Activated CD4-positive, alpha-beta memory T cell treated with anti-CD3 and anti-CD28 coated beads for 36 hours (primary cell): ENCODE measurements at regions of chr6 and their contacts with region 1.

Region 1: DNA sequence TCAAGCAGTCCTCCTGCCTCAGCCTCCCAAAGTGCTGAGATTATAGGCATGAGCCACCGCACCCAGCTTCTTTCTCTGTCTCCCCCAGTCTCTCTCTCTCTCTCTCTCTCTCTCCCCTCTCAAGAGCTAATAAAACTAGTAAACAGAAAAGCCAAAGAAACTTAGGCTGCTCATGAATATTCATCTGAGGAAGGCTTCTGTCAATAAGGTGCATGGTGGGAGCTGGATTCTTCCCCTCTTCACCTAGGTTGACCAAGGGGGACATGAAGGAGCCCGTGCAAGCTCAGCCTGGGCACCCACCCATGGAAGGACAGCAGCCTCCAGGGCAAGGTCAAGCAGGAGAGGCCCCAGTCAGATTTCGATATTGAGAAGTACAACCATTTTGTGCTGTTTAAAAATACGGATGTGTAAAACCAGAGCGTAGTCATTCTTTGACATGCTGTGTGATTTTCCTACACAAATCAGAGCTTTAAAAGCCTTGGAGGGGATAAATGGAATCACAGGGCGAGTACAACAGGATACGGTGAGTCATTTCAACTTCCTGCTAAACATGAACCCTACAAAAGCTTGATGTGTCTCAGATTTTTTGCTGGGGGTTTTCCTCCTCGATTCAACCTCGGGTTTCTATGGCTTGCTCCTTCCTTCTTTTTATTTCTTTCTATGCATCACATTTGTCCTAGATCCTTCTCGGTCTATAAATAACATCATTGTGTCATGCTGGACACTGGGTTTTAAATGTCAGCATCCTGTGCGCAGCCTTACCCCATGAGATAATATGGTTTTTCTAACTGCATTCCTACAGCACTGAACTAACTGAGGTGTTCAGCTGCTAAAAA is 368.9 kb upstream of the JARID2 start:
- DNase-seq: peak; percentile 59
- H3K4me3 Mint-ChIP-seq: peak overlapping the region; percentile 40
- H3K27ac Mint-ChIP-seq: peak overlapping the region; percentile 97
- H3K4me1 Mint-ChIP-seq: peaks cover 74% of the 10 kb centered on the region
- H3K27me3 Mint-ChIP-seq: no peaks in the 10 kb centered on the region

Region 2: GRCh38 chr6:14452567-14453527 is 424.1 kb before region 1 on chr6:
- CTCF ChIA-PET with region 1: no interaction called
- POLR2A ChIA-PET with region 1: no interaction called
- intact Hi-C with region 1: loop called (anchors 1 kb)
- DNase-seq: peak; percentile 88
- H3K4me3 Mint-ChIP-seq: peak overlapping the region; percentile 34
- H3K27ac Mint-ChIP-seq: peak overlapping the region; percentile 88
- H3K4me1 Mint-ChIP-seq: peaks cover 76% of the 10 kb centered on the region
- H3K27me3 Mint-ChIP-seq: no peaks in the 10 kb centered on the region

Region 3: DNA sequence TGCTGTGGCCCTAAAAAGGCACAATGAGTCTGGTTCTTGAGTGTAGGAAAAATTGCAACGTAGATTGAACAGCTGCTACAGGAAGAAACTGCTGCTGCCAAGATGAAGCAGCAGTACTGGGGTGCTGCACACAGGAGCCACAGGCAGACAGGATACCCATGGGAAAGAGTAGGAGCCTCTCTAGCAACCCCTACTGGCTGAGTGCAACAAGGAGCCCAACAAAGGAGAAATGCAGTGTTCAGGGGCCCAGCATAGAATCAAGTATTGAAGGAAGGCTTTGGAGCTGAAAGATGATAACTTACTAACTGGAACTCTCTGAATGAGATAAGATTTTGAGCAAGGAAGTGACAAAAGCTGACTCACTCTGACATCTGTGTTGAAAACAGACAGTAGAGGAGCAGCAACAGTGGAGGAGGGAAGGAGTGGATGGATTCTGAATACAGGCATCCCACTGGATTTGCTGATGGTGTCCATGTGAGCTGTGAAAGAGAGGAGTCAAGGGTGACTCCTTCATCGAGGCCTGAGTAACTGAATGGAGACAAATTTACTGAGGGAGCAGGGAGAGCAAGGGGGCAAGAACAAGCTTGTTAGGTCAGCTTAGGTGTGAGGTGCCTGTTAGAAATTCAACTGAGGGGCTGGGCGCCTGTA is 165.8 kb before region 1 on chr6:
- CTCF ChIA-PET with region 1: interaction called, 5 read pairs
- POLR2A ChIA-PET with region 1: interaction called, 5 read pairs
- intact Hi-C with region 1: loop called (anchors 1 kb)
- DNase-seq: peak; percentile 86
- H3K4me3 Mint-ChIP-seq: peak overlapping the region; percentile 80
- H3K27ac Mint-ChIP-seq: peak overlapping the region; percentile 96
- H3K4me1 Mint-ChIP-seq: peaks cover 70% of the 10 kb centered on the region
- H3K27me3 Mint-ChIP-seq: no peaks in the 10 kb centered on the region

Region 4: DNA sequence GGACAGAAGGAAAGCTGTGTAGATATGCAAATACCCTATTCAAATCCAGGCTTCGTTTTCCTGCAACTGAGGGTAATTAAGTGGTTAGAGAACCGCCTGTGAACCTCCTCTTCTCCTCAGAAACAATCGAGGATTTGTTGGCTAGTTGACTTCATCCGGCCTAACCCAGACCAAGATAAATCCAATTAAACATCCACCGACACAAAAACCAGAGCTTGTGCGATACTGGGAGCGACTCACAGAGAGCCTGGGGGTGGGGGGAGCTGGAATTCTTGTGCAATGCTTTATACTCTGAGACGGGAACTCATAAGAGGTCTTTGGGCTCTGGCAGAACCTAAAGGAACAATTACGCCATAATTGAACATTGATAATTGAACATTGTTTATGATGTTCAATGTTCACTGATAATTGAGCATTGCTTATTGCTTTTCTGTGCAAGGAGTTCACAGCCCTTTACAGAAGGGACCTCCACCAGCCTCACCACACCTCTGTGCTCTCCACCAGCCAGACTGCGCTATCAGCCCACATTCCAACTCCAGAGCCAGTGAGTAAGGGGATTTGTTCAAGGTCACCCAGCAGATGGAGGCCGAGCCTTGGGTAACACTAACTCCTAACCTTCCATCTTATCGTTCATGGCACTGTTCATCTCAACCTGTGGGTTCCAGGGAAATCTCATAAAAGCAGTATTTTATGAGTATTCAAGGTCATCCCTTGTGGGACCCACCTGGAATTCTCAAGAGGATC is 60.7 kb before region 1 on chr6:
- CTCF ChIA-PET with region 1: no interaction called
- POLR2A ChIA-PET with region 1: interaction called, 6 read pairs
- intact Hi-C with region 1: loop called (anchors 1 kb)
- DNase-seq: no peak
- H3K4me3 Mint-ChIP-seq: no peak overlapping the region
- H3K27ac Mint-ChIP-seq: no peak overlapping the region
- H3K4me1 Mint-ChIP-seq: peaks cover 22% of the 10 kb centered on the region
- H3K27me3 Mint-ChIP-seq: no peaks in the 10 kb centered on the region

Region 5: GRCh38 chr6:15184441-15184861 is 307.5 kb after region 1 on chr6:
- CTCF ChIA-PET with region 1: interaction called, 4 read pairs
- POLR2A ChIA-PET with region 1: no interaction called
- intact Hi-C with region 1: loop called (anchors 1 kb)
- DNase-seq: peak; percentile 58
- H3K4me3 Mint-ChIP-seq: peak overlapping the region; percentile 37
- H3K27ac Mint-ChIP-seq: peak overlapping the region; percentile 95
- H3K4me1 Mint-ChIP-seq: peaks cover 20% of the 10 kb centered on the region
- H3K27me3 Mint-ChIP-seq: no peaks in the 10 kb centered on the region

Region 6: GRCh38 chr6:15479761-15480160 is 602.8 kb after region 1 on chr6:
- CTCF ChIA-PET with region 1: no interaction called
- POLR2A ChIA-PET with region 1: no interaction called
- intact Hi-C with region 1: loop called (anchors 10 kb)
- DNase-seq: no peak
- H3K4me3 Mint-ChIP-seq: no peak overlapping the region
- H3K27ac Mint-ChIP-seq: no peak overlapping the region
- H3K4me1 Mint-ChIP-seq: peaks cover 55% of the 10 kb centered on the region
- H3K27me3 Mint-ChIP-seq: no peaks in the 10 kb centered on the region